Naive thymus-derived CD4-positive, alpha-beta T cell (primary cell): ENCODE measurements at regions of chr1 and their contacts with region 1.

Region 1: GRCh38 chr1:199081739-199082138 is 442.9 kb downstream of the PTPRC start:
- DNase-seq: no peak
- ATAC-seq: no peak
- H3K4me3 ChIP-seq: no peak overlapping the region
- H3K4me3 Mint-ChIP-seq: no peak overlapping the region
- H3K27ac ChIP-seq: no peak overlapping the region
- H3K27ac Mint-ChIP-seq: no peak overlapping the region
- H3K4me1 ChIP-seq: no peaks in the 10 kb centered on the region
- H3K4me1 Mint-ChIP-seq: peaks cover 0 to 17% (median 0%) of the 10 kb centered on the region in 7 donors
- H3K27me3 ChIP-seq: no peaks in the 10 kb centered on the region
- H3K27me3 Mint-ChIP-seq: peaks cover 0 to 4% (median 0%) of the 10 kb centered on the region in 5 donors

Region 2: GRCh38 chr1:198948895-198949659 is 132.7 kb before region 1 on chr1:
- CTCF ChIA-PET with region 1: no interaction called
- POLR2A ChIA-PET with region 1: no interaction called
- intact Hi-C with region 1: no loop called
- DNase-seq: no peak
- ATAC-seq: no peak
- H3K4me3 ChIP-seq: no peak overlapping the region
- H3K4me3 Mint-ChIP-seq: no peak overlapping the region
- H3K27ac ChIP-seq: no peak overlapping the region
- H3K27ac Mint-ChIP-seq: no peak overlapping the region
- H3K4me1 ChIP-seq: no peaks in the 10 kb centered on the region
- H3K4me1 Mint-ChIP-seq: peaks cover 0 to 9% (median 0%) of the 10 kb centered on the region in 7 donors
- H3K27me3 ChIP-seq: no peaks in the 10 kb centered on the region
- H3K27me3 Mint-ChIP-seq: no peaks in the 10 kb centered on the region

Region 3: DNA sequence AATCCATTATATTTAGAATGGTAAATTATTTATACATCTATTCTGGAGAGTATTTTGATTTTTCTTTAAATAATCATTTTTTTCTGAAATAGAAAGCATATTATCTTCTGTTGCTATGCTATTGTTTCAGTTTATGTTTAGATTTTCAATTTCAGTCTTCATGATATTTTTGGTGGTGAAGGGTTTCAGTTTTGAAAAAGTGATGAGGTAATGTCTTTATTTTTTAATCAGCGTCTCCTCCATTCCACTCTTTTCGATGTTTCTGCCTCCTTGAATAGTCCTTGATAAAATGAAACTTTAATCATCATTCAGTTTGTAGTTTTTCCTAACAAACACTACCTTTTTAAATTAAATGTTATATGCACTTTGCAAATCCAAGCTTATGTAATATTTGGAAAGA is 14.3 kb before region 1 on chr1:
- CTCF ChIA-PET with region 1: no interaction called
- POLR2A ChIA-PET with region 1: no interaction called
- intact Hi-C with region 1: loop called in 1 of 2 experiments (anchors 2 kb)
- DNase-seq: no peak
- ATAC-seq: no peak
- H3K4me3 ChIP-seq: no peak overlapping the region
- H3K4me3 Mint-ChIP-seq: peak overlapping the region in 1 of 10 donors; percentile 37
- H3K27ac ChIP-seq: no peak overlapping the region
- H3K27ac Mint-ChIP-seq: peak overlapping the region in 1 of 9 donors; percentile 36
- H3K4me1 ChIP-seq: no peaks in the 10 kb centered on the region
- H3K4me1 Mint-ChIP-seq: peaks cover 0 to 39% (median 0%) of the 10 kb centered on the region in 7 donors
- H3K27me3 ChIP-seq: no peaks in the 10 kb centered on the region
- H3K27me3 Mint-ChIP-seq: peaks cover 0 to 5% (median 0%) of the 10 kb centered on the region in 5 donors

Region 4: DNA sequence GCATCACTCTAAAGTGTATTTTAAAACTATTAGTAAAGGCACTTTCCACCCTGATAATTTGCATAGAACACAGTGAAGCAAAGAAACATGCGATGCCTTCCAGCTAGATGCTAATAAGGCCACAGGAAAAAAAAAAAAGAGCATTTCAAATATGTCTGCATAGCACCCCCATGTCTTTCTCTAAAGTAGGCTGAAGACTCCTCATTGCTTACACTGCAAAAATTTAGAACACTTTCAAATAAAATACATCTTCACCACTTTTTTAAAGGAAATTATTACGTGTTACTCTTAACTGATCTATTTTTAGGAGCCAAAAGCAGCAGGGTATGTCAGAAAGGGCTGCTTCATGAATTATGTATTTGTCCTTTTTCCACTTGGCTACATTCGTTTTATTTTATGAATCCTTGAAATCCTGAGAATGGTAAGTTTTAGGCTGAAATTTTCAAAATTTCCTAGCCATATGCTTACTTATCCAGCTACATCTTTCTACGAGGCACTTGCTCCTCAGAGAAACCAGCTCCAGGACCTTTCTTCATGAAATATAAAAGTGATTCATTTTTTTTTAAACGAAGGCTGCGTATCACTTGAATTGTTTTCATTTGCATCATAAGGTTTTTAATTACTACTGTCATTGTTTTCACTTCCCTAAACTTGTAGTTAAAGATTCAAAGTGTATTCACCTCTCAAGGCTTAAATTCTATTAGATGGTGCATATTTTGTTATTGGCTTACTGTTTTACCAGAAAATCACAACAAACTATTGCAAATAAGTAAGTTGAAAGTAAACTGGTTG is 70.1 kb after region 1 on chr1:
- CTCF ChIA-PET with region 1: no interaction called
- POLR2A ChIA-PET with region 1: no interaction called
- intact Hi-C with region 1: no loop called
- DNase-seq: no peak
- ATAC-seq: no peak
- H3K4me3 ChIP-seq: no peak overlapping the region
- H3K4me3 Mint-ChIP-seq: no peak overlapping the region
- H3K27ac ChIP-seq: no peak overlapping the region
- H3K27ac Mint-ChIP-seq: no peak overlapping the region
- H3K4me1 ChIP-seq: no peaks in the 10 kb centered on the region
- H3K4me1 Mint-ChIP-seq: no peaks in the 10 kb centered on the region
- H3K27me3 ChIP-seq: no peaks in the 10 kb centered on the region
- H3K27me3 Mint-ChIP-seq: peaks cover 0 to 38% (median 4%) of the 10 kb centered on the region in 5 donors